ENCODE measurements at regions of chr13 and their contacts with region 1.

Region 1: DNA sequence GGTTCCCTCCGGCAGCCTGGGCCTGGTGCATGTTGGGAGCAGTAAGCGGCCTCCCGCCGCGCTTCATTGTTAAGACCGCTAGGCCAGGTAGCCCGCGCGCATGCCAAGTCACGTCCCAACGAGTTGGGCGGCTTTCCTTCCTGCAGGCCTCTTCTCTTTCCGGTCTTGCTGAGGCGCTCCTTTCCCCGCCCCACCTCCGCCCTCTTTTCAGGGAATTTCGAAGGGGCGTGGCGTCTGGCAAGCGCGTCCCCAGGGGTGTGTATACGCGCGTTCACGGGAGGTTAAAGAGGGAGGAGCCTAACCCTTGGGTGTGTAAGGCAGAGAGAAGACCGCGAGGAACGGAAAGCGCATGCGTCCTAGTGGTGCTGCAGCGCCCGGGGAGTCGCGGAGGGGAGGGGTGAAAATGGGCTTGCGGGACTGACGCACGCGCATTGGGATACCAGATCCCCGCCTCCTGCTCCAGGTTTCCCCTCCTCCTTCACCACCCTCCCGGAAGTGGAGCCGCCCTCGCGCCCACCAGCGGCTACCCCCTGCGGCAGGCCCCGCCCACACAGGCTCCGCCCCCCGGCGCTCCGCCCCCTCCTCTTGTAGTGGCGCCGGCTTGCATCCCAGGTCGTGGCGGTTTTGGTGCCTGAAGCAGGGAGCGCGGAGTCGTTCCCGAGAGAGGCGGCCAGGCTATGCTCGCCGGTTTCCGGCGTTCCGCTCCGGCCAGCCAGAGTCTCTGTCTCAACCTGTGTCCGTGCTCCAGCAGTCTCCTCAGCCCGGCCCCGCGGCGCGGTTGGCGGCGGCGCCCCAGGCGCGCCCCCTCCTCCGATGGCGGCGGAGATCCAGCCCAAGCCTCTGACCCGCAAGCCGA is at the start of gene WDFY2:
- DNase-seq: peak; percentile 97 to 99 (median 99)
- H3K4me3 ChIP-seq: peak within 1 kb of the TSS; percentile 68 to 100 (median 93)
- H3K27ac ChIP-seq: peak within 1 kb of the TSS; percentile 75 to 98 (median 94)
- H3K27me3 ChIP-seq: no peaks in the 10 kb centered on the region
- CTCF ChIP-seq: peak in 55 of 56 donors; percentile 19 to 74 (median 59)
- total RNA-seq, gene WDFY2: 10.9 to 39.0 (median 19.4) TPM

Region 2: GRCh38 chr13:51452361-51453206 is 131.5 kb before region 1 on chr13 and contains the start of gene INTS6:
- intact Hi-C with region 1: loop called (anchors 1 kb)
- DNase-seq: peak in 9 of 10 donors; percentile 100
- H3K4me3 ChIP-seq: peak within 1 kb of the TSS; percentile 76 to 96 (median 90)
- H3K27ac ChIP-seq: peak within 1 kb of the TSS; percentile 89 to 100 (median 99)
- H3K27me3 ChIP-seq: no peaks in the 10 kb centered on the region
- CTCF ChIP-seq: peak in 2 of 56 donors; percentile 0 to 9
- total RNA-seq, gene INTS6: 30.1 to 60.5 (median 42.9) TPM

Region 3: DNA sequence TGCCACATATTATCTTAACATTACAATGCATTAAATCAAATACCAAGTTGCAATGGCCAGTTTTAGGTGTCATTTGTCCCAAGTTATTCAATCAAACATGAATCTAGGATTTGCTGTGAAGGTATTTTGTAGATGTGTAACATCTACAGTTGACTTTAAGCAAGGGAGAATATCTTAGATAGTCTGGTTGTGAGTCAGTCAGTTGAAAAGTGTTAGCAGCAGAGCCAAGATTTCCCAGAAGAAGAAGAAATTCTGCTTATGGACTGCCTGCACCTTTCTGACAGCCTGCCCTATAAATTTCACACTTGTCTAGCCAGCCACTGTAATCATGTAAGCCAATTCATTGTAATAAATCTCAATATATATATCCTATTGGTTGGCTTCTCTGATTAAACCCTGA is 89.9 kb before region 1 on chr13:
- intact Hi-C with region 1: no loop called
- DNase-seq: no peak
- H3K4me3 ChIP-seq: no peak overlapping the region
- H3K27ac ChIP-seq: no peak overlapping the region
- H3K27me3 ChIP-seq: no peaks in the 10 kb centered on the region
- CTCF ChIP-seq: no peak

Region 4: GRCh38 chr13:51542346-51543242 is 41.5 kb before region 1 on chr13:
- intact Hi-C with region 1: loop called in 1 of 2 experiments (anchors 5 kb)
- DNase-seq: no peak
- H3K4me3 ChIP-seq: peak overlapping the region in 34 of 59 donors; percentile 4 to 50 (median 26)
- H3K27ac ChIP-seq: peak overlapping the region in 45 of 59 donors; percentile 1 to 75 (median 39)
- H3K27me3 ChIP-seq: no peaks in the 10 kb centered on the region
- CTCF ChIP-seq: no peak

Region 5: DNA sequence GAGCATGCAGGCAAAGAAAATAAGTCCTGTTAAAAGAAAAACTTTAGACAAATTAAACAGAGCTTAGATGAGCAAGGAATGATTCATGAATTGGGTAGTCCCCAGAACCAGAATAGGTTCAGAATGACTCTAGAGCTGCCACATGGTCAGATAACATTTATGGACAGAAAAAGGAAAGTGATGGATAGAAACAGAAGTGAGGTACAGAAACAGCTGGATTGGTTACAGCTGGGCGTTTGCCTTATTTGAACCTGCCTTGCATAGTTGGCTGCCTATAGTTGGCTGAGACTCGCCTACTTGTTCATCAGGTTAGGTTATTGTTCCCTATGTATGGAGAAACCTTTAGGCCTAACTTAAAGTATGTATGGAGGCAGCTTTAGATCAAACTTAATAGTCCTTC is 35.5 kb after region 1 on chr13:
- intact Hi-C with region 1: loop called (anchors 1 to 5 kb)
- DNase-seq: no peak
- H3K4me3 ChIP-seq: no peak overlapping the region
- H3K27ac ChIP-seq: peak overlapping the region; percentile 49 to 96 (median 91)
- H3K27me3 ChIP-seq: no peaks in the 10 kb centered on the region
- CTCF ChIP-seq: no peak

Region 6: DNA sequence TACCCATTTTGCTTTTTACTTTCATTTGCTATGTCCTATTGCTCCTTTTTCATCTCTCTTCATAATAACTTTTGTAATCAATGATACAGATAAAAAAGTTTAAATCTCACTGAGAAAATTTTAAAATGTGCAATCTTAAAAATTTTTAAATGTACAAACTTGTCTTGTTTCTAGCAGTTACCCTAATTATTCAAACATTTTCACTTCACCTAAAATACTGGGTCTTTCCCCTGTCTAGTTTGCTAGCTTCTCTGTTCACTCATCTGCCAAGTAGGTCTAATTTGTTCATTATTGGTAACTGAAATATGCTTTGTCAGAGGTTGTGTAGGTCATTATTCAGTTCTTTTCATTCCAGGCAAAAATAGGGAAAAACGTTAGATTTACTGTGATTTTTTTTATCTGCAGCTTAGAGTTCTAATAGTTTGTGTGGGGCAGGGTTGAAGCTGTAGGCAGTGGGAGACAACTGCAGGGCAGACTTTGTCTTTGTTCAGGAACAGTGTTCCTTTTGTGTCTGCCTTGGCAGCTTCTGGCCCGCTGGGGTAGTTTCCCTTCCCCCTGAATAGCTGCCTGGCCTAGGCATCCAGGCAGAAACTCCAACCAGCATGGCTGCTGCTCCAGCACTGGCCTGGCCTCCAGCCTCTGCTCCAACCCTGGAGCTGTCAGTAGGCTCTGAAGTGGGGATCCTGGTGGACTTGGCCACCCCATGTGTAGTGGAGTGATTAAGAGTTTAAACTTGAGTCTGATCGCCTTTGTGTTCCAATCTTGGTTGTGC is 48.7 kb after region 1 on chr13:
- intact Hi-C with region 1: loop called in 1 of 2 experiments (anchors 5 kb)
- DNase-seq: peak; percentile 21 to 88 (median 84)
- H3K4me3 ChIP-seq: peak overlapping the region in 44 of 59 donors; percentile 3 to 57 (median 30)
- H3K27ac ChIP-seq: peak overlapping the region; percentile 54 to 97 (median 90)
- H3K27me3 ChIP-seq: no peaks in the 10 kb centered on the region
- CTCF ChIP-seq: peak in 13 of 56 donors; percentile 11 to 44 (median 26)

Region 7: GRCh38 chr13:51729866-51730546 is 145.9 kb after region 1 on chr13:
- intact Hi-C with region 1: loop called (anchors 1 to 5 kb)
- DNase-seq: no peak
- H3K4me3 ChIP-seq: no peak overlapping the region
- H3K27ac ChIP-seq: peak overlapping the region in 40 of 59 donors; percentile 11 to 93 (median 60)
- H3K27me3 ChIP-seq: no peaks in the 10 kb centered on the region
- CTCF ChIP-seq: no peak

Measured in dorsolateral prefrontal cortex (tissue), 120 donors.